ENCODE measurements at regions of chr15 and their contacts with region 1.

Region 1: GRCh38 chr15:73982222-73982962 is 9.7 kb downstream of the STOML1 start:
- DNase-seq: peak; percentile 69
- H3K4me3 ChIP-seq: no peak overlapping the region
- H3K27me3 ChIP-seq: no peaks in the 10 kb centered on the region
- CTCF ChIP-seq: no peak

Region 2: DNA sequence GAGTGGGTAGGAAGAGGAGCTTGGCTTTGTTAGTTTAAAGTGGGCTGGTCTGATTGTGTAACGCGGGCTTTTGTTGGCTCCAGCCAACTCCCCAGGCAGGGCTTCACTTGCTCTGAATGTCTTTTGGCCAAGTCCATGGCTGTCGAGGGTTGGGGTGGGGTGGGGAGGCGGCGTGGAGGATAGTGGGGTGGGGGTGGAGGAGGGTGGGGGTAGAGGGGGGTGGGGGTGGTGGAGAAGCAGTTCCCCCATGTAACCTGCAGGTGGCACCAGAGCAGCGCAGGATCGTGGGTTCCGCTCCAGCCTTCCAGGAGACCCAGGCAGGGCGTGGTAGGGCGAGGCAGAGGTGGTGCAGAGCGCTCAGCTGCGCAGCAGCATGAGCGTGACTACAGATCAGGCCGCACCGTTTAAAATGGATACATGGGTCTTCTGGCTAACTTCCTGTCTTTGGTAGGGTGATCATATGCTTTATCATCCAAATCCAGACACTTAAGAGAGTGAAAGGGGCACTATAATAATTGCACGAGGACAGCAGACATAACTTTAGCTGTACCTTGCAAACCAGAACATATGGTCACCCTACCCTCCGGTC is 71.6 kb after region 1 on chr15:
- CTCF ChIA-PET with region 1: interaction called, 121 read pairs
- POLR2A ChIA-PET with region 1: interaction called, 4 read pairs
- DNase-seq: peak; percentile 51
- H3K4me3 ChIP-seq: no peak overlapping the region
- H3K27me3 ChIP-seq: no peaks in the 10 kb centered on the region
- CTCF ChIP-seq: peak; percentile 76